ENCODE measurements at regions of chr12 and their contacts with region 1.

Region 1: DNA sequence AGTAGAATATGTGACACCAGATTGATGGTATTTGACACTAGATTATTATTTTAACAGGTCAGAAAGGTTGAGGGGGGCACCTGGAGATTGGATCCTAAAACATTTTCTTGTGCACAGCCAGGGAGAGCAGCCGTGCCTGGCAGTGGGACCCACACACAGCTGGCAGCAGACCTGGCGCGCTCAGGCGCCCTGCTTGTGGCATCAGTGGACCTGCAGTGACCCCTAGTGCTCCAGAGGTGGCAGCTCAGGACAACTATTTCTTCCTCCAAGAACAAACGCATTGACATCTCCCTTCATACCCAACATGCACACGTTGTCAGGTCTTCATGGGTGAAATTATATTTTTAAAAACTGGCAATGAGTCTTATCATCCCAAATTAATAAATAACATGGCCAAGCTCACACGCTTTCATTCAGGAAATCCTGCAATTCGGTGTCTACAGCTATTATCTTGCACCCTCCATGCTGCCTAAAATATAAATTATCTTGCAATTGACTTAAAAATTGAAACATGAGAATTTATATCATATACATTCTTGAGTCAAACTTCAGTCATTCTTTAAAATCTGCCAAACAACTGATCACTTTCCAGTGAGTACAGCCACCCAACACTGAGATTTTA is 7.7 kb upstream of the TMEM132D start:
- DNase-seq: no peak
- ATAC-seq: no peak

Region 2: GRCh38 chr12:128259556-128260070 is 1651.9 kb before region 1 on chr12:
- intact Hi-C with region 1: loop called (anchors 10 kb)
- DNase-seq: no peak
- ATAC-seq: no peak

Region 3: DNA sequence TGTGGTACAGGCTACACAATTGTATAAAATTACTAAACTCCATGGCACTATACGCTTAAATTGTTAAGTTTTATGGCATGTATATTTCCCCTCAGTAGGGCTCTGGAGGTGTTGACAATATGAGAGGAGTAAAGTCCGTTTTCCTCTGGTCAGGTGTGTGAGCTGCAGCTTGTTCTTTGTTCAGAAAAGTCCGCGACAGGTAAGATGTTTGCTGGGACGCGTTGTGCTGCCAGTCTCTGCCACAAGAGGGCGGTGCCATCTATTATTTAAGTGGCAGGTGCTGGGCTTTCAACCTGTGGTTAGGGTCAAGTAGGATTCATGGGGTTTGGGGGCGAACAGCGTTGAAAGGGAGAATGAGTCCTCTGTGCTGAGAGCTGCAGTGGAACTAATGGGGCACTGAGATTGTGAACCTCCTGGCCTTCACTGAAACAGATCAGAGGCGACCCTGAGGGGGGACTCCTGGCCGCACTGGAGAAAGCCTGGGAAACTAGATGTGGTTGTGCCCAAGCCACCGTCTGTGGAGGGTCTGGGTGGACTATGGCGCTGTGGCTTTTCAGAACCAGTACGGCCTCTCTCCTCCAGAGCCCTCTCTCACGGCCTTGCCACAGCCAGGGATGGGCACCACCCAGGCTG is 1266.8 kb before region 1 on chr12:
- intact Hi-C with region 1: loop called (anchors 10 kb)
- DNase-seq: no peak
- ATAC-seq: no peak

Measured in Right ventricle myocardium inferior (tissue), 1 donor.